Activated B cell treated with CpG ODN at 0.5 μM for 24 hours (primary cell): ENCODE measurements at regions of chr12 and their contacts with region 1.

Region 1: DNA sequence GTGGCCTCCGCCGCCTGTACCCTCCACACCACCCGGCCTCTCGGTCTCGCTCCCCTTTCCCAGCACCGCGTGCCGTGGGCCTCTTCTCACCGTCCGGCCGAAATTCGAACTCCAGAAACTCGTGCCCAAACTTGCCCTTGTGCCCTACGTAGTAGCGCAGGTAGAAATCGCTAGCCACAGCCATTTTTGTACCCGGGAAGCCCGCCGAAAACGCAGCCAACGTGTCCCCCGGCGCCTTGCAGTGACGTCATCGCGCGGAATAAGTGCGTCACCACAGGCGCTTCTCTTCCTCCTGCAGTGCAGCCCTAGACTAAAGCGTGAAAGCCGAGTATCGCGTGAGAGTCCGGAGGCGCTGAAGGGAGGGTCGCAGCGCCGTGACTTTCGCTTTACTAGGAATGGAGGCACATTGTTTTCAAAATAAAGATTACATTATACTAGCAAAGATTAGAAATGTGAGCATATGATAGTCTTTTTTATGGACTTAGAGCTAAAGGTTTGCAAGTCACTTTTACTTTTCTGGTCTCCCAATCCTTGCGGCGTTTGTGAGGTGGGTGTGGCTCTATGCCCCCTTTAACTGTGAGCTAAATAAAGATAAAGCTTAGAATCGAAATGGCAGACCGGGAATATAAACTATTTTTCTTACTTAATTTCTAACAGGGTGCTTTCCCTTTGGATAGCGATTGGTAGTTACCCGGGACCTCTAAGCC is at the start of gene MAGOHB:
- DNase-seq: peak; percentile 99
- ATAC-seq: peak; percentile 96
- H3K4me3 Mint-ChIP-seq: peak within 1 kb of the TSS; percentile 100
- H3K27ac Mint-ChIP-seq: peak within 1 kb of the TSS; percentile 100
- H3K4me1 Mint-ChIP-seq: peaks cover 29% of the 10 kb centered on the region
- H3K27me3 Mint-ChIP-seq: peaks cover 6% of the 10 kb centered on the region
- CTCF ChIP-seq: no peak
- total RNA-seq, gene MAGOHB: 25.0 and 28.8 TPM in 2 replicates

Region 2: GRCh38 chr12:9869307-9870161 is 744.0 kb before region 1 on chr12 and contains the start of gene CLEC2B:
- CTCF ChIA-PET with region 1: no interaction called
- POLR2A ChIA-PET with region 1: no interaction called
- intact Hi-C with region 1: loop called (anchors 5 kb)
- DNase-seq: no peak
- ATAC-seq: peak; percentile 63
- H3K4me3 Mint-ChIP-seq: peak within 1 kb of the TSS; percentile 95
- H3K27ac Mint-ChIP-seq: peak within 1 kb of the TSS; percentile 98
- H3K4me1 Mint-ChIP-seq: peaks cover 37% of the 10 kb centered on the region
- H3K27me3 Mint-ChIP-seq: peaks cover 2% of the 10 kb centered on the region
- CTCF ChIP-seq: no peak
- total RNA-seq, gene CLEC2B: 18.4 and 19.1 TPM in 2 replicates

Region 3: GRCh38 chr12:10364815-10365622 is 248.5 kb before region 1 on chr12:
- CTCF ChIA-PET with region 1: no interaction called
- POLR2A ChIA-PET with region 1: interaction called, 3 read pairs
- intact Hi-C with region 1: loop called (anchors 1 kb)
- DNase-seq: peak; percentile 35
- ATAC-seq: peak; percentile 73
- H3K4me3 Mint-ChIP-seq: no peak overlapping the region
- H3K27ac Mint-ChIP-seq: no peak overlapping the region
- H3K4me1 Mint-ChIP-seq: peaks cover 7% of the 10 kb centered on the region
- H3K27me3 Mint-ChIP-seq: no peaks in the 10 kb centered on the region
- CTCF ChIP-seq: no peak

Region 4: DNA sequence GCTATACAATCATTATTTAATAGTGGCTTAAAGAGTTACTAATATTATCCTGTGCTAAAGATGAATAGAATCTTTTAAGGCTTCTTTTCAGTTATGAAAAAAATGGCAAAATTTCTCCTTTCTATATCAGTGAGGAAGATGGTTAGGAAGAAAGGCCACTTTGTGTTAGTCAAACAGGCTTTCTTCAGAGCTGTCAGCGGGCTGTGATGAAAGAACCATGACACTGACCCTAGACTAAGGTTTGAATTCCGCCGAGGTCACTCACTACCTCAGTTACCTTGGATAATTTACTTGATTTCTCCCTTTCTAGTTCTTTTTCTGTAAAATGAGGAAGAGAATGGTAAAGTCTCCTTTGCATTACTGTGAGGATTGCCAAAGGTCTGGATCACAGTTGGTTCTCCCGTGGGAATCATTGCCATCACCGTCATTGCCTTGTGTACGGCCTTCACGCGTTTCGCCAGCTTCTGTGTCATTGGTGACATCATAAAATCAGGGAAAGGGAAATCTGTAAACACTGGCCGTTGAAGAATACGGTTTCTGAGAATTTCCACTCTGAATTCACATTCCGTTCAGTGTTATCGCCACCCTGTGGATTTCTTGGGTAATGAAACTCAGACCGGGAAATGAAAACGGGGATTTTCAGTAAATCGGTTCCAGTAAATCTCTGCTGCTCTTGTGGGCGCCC is 136.3 kb after region 1 on chr12:
- CTCF ChIA-PET with region 1: interaction called, 4 read pairs
- POLR2A ChIA-PET with region 1: no interaction called
- intact Hi-C with region 1: loop called (anchors 1 kb)
- DNase-seq: no peak
- ATAC-seq: peak; percentile 99
- H3K4me3 Mint-ChIP-seq: peak overlapping the region; percentile 70
- H3K27ac Mint-ChIP-seq: no peak overlapping the region
- H3K4me1 Mint-ChIP-seq: peaks cover 8% of the 10 kb centered on the region
- H3K27me3 Mint-ChIP-seq: peaks cover 18% of the 10 kb centered on the region
- CTCF ChIP-seq: no peak

Region 5: GRCh38 chr12:11202811-11203210 is 589.3 kb after region 1 on chr12:
- CTCF ChIA-PET with region 1: no interaction called
- POLR2A ChIA-PET with region 1: no interaction called
- intact Hi-C with region 1: loop called (anchors 1 kb)
- DNase-seq: no peak
- ATAC-seq: no peak
- H3K4me3 Mint-ChIP-seq: no peak overlapping the region
- H3K27ac Mint-ChIP-seq: no peak overlapping the region
- H3K4me1 Mint-ChIP-seq: no peaks in the 10 kb centered on the region
- H3K27me3 Mint-ChIP-seq: no peaks in the 10 kb centered on the region
- CTCF ChIP-seq: no peak